ENCODE measurements at regions of chr7 and their contacts with region 1.

Region 1: GRCh38 chr7:33932832-33933468 is 27.6 kb downstream of the BMPER start:
- DNase-seq: peak; percentile 83
- ATAC-seq: peak; percentile 87
- H3K4me3 ChIP-seq: no peak overlapping the region
- H3K27ac ChIP-seq: no peak overlapping the region
- H3K4me1 ChIP-seq: peaks cover 11% of the 10 kb centered on the region
- H3K27me3 ChIP-seq: no peaks in the 10 kb centered on the region
- CTCF ChIP-seq: peak; percentile 93
- POLR2A ChIP-seq: no peak
- RAD21 ChIP-seq: peak; percentile 88

Region 2: GRCh38 chr7:33243319-33243881 is 689.5 kb before region 1 on chr7:
- CTCF ChIA-PET with region 1: interaction called, 6 read pairs
- POLR2A ChIA-PET with region 1: no interaction called
- dilution Hi-C with region 1: no loop called
- in situ Hi-C with region 1: no loop called
- intact Hi-C with region 1: loop called (anchors 2 kb)
- DNase-seq: peak; percentile 70
- ATAC-seq: peak; percentile 93
- H3K4me3 ChIP-seq: no peak overlapping the region
- H3K27ac ChIP-seq: no peak overlapping the region
- H3K4me1 ChIP-seq: no peaks in the 10 kb centered on the region
- H3K27me3 ChIP-seq: no peaks in the 10 kb centered on the region
- CTCF ChIP-seq: peak; percentile 85
- POLR2A ChIP-seq: no peak
- RAD21 ChIP-seq: peak; percentile 88

Region 3: GRCh38 chr7:33423646-33424020 is 509.3 kb before region 1 on chr7:
- CTCF ChIA-PET with region 1: interaction called, 3 read pairs
- POLR2A ChIA-PET with region 1: no interaction called
- dilution Hi-C with region 1: no loop called
- in situ Hi-C with region 1: loop called (anchors 10 kb)
- intact Hi-C with region 1: loop called (anchors 2 kb)
- DNase-seq: no peak
- ATAC-seq: no peak
- H3K4me3 ChIP-seq: no peak overlapping the region
- H3K27ac ChIP-seq: no peak overlapping the region
- H3K4me1 ChIP-seq: peaks cover 7% of the 10 kb centered on the region; the same call in 1 of the 2 replicates
- H3K27me3 ChIP-seq: peaks cover 13% of the 10 kb centered on the region
- CTCF ChIP-seq: peak; percentile 26; the same call in 1 of the 2 replicates
- POLR2A ChIP-seq: no peak
- RAD21 ChIP-seq: peak; percentile 36

Region 4: DNA sequence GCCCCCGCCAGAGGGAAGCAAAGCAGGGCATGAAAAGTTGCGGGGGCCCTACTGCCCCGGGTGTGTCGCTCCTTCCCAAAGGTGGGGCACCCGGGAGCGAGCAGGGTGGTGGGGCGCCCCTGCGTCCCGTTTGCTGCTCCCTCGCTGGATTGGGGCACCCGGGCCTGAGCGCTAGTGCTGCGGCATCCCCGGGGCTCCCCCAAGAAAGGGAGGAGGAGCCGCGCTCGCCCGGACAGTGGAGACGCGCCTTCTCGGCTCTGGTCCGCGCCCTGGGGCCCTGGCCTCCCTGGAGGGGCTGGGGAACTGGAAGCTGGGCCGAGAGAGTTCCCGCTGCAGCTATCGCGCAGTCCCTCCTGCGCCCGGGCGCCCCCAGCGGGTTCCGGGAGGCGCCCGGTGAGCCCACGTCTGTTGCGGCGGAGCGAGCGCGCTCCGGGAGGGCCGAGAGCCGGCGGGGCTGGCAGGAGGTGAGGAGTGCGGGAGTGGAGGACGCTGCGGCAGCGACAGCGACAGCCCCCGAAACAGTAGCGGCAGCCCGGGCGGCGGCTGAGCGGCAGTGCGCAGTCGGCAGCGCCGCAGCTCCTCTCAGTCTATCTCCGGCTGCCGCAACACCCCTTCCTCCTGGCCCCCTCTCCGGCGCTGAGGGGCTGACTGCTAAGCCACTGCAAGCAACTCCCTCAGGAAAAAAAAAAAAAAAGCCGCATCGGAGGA is 28.1 kb before region 1 on chr7:
- CTCF ChIA-PET with region 1: interaction called, 11 read pairs
- POLR2A ChIA-PET with region 1: no interaction called
- dilution Hi-C with region 1: no loop called
- in situ Hi-C with region 1: no loop called
- intact Hi-C with region 1: no loop called
- DNase-seq: peak; percentile 59
- ATAC-seq: peak; percentile 82
- H3K4me3 ChIP-seq: peak overlapping the region; percentile 70
- H3K27ac ChIP-seq: peak overlapping the region; percentile 74
- H3K4me1 ChIP-seq: peaks cover 4% of the 10 kb centered on the region; the same call in 1 of the 2 replicates
- H3K27me3 ChIP-seq: no peaks in the 10 kb centered on the region
- CTCF ChIP-seq: peak; percentile 36
- POLR2A ChIP-seq: no peak
- RAD21 ChIP-seq: no peak

Region 5: DNA sequence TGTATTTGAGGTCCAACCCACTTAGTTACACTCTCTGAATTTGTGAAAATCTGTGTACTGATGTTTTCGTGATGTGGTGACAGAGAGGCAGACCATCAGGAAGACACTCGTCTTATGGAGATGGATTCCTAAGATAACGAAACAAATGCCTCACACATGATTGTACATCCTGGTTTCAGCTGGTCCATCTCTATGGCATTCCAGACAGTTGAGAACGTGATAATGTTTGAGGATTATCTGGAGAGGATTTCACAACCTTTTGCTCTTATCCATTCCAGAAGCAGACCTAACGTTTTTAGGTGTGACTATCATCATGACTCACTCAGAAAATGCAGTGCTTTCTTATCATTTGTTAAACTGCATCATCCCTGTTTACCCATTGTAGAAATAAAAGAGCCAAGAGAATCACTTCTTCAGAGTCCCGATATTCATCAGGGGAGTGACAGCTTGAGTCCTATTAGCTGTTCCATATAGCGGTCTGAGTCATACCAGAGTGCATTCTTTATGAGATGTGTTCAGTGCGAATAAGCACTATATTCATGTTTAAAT is 46.9 kb after region 1 on chr7:
- CTCF ChIA-PET with region 1: interaction called, 11 read pairs
- POLR2A ChIA-PET with region 1: no interaction called
- dilution Hi-C with region 1: no loop called
- in situ Hi-C with region 1: no loop called
- intact Hi-C with region 1: loop called (anchors 1 kb)
- DNase-seq: peak; percentile 99
- ATAC-seq: peak; percentile 83
- H3K4me3 ChIP-seq: no peak overlapping the region
- H3K27ac ChIP-seq: peak overlapping the region; percentile 92
- H3K4me1 ChIP-seq: peaks cover 23% of the 10 kb centered on the region
- H3K27me3 ChIP-seq: no peaks in the 10 kb centered on the region
- CTCF ChIP-seq: no peak
- POLR2A ChIP-seq: 0 out of 2 replicates have a peak, but pooled peaks have one; percentile 10
- RAD21 ChIP-seq: peak; percentile 15; the same call in 1 of the 2 replicates

Region 6: GRCh38 chr7:34091323-34091917 is 158.5 kb after region 1 on chr7:
- CTCF ChIA-PET with region 1: no interaction called
- POLR2A ChIA-PET with region 1: no interaction called
- dilution Hi-C with region 1: no loop called
- in situ Hi-C with region 1: no loop called
- intact Hi-C with region 1: no loop called
- DNase-seq: peak; percentile 69
- ATAC-seq: 0 out of 2 replicates have a peak, but pooled peaks have one; percentile 16
- H3K4me3 ChIP-seq: no peak overlapping the region
- H3K27ac ChIP-seq: no peak overlapping the region
- H3K4me1 ChIP-seq: peaks cover 3% of the 10 kb centered on the region
- H3K27me3 ChIP-seq: no peaks in the 10 kb centered on the region
- CTCF ChIP-seq: peak; percentile 76
- POLR2A ChIP-seq: no peak
- RAD21 ChIP-seq: peak; percentile 80

Region 7: DNA sequence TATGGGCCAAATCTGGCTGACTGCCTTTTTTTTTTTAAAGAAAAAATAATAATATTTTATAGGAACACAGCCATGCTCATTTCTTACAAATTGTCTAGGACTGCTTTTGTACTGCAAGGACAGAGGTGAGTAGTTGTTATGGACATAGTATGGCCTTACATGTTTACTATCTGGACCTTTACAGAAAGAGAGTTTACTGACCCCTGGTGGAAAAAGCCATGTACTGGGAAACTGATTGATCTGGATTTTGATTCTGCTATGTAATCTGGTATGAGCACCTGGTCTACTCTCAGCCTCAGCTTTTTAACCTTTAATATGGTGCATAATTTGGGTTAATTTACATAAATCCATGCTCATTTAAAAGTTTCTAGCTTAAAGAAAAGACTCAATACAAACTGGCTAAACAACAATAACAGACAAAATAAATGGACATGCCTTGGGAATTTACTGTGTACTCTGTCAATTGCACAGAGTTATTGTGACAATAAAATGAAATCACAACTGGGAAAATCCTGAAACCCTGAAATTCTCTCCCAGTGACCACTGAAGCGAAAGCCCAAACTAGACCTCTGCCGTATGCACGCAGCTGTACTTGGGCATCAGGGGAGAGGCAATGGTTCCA is 233.1 kb after region 1 on chr7:
- CTCF ChIA-PET with region 1: no interaction called
- POLR2A ChIA-PET with region 1: no interaction called
- dilution Hi-C with region 1: no loop called
- in situ Hi-C with region 1: no loop called
- intact Hi-C with region 1: loop called (anchors 10 kb)
- DNase-seq: peak; percentile 60
- ATAC-seq: peak; percentile 82
- H3K4me3 ChIP-seq: no peak overlapping the region
- H3K27ac ChIP-seq: no peak overlapping the region
- H3K4me1 ChIP-seq: peaks cover 2% of the 10 kb centered on the region; the same call in 1 of the 2 replicates
- H3K27me3 ChIP-seq: no peaks in the 10 kb centered on the region
- CTCF ChIP-seq: peak; percentile 76
- POLR2A ChIP-seq: no peak
- RAD21 ChIP-seq: peak; percentile 74

Region 8: DNA sequence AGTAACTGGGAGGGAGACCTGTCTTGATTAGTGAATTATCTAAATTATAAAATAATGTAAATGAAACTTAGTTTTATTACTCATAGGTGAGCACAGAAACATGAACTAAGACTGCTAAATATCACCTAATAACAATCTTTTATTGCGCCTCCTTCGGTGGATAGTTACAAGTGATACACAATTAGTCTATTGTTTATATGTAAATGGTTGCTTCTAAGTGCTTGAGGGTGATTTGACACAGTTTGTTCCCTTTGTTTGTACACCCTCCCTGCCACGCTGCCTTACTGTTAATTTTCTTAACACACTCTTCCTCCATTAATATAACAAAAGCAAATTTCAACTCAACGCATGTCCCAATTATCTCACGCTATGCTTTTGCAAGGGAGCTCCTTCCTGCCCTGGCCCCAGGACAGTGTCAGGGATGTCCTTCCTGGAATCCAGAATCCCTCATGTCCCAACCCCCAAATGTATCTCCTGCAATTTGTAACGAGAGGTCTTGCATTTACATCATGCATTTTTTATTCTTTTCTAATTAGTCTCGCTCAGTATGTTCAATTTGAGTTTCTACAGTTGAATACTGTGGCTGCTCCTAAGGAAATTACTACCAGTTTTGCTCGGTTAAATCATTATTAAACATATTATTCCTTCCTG is 729.2 kb after region 1 on chr7:
- CTCF ChIA-PET with region 1: no interaction called
- POLR2A ChIA-PET with region 1: no interaction called
- dilution Hi-C with region 1: no loop called
- in situ Hi-C with region 1: no loop called
- intact Hi-C with region 1: no loop called
- DNase-seq: no peak
- ATAC-seq: no peak
- H3K4me3 ChIP-seq: no peak overlapping the region
- H3K27ac ChIP-seq: no peak overlapping the region
- H3K4me1 ChIP-seq: no peaks in the 10 kb centered on the region
- H3K27me3 ChIP-seq: no peaks in the 10 kb centered on the region
- CTCF ChIP-seq: no peak
- POLR2A ChIP-seq: no peak
- RAD21 ChIP-seq: no peak

Measured in IMR-90 (cell line).